ENCODE measurements at regions of chr17 and their contacts with region 1.

Region 1: GRCh38 chr17:76714822-76715495 is 4.2 kb upstream of the MXRA7 start:
- DNase-seq: peak; percentile 73
- ATAC-seq: no peak
- H3K4me3 Mint-ChIP-seq: no peak overlapping the region
- H3K27ac Mint-ChIP-seq: peak overlapping the region; percentile 40; the same call in 1 of the 2 replicates
- H3K4me1 Mint-ChIP-seq: peaks cover 9% of the 10 kb centered on the region
- H3K27me3 Mint-ChIP-seq: peaks cover 2% of the 10 kb centered on the region
- CTCF ChIP-seq: peak; percentile 68; the same call in 1 of the 2 replicates

Region 2: GRCh38 chr17:76700617-76701470 is 14.1 kb before region 1 on chr17:
- CTCF ChIA-PET with region 1: interaction called, 45 read pairs
- POLR2A ChIA-PET with region 1: no interaction called
- DNase-seq: peak; percentile 41
- ATAC-seq: peak; percentile 61
- H3K4me3 Mint-ChIP-seq: no peak overlapping the region
- H3K27ac Mint-ChIP-seq: peak overlapping the region; percentile 87
- H3K4me1 Mint-ChIP-seq: peaks cover 46% of the 10 kb centered on the region
- H3K27me3 Mint-ChIP-seq: no peaks in the 10 kb centered on the region
- CTCF ChIP-seq: no peak